ENCODE measurements at regions of chr5 and their contacts with region 1.

Region 1: GRCh38 chr5:18420711-18421110 is 786.5 kb downstream of the TAF11L14 start:
- DNase-seq: no peak
- H3K4me3 ChIP-seq: no peak overlapping the region
- H3K27ac ChIP-seq: no peak overlapping the region
- H3K4me1 ChIP-seq: no peaks in the 10 kb centered on the region
- H3K27me3 ChIP-seq: no peaks in the 10 kb centered on the region
- CTCF ChIP-seq: no peak
- EP300 ChIP-seq: no peak
- POLR2A ChIP-seq: no peak

Region 2: DNA sequence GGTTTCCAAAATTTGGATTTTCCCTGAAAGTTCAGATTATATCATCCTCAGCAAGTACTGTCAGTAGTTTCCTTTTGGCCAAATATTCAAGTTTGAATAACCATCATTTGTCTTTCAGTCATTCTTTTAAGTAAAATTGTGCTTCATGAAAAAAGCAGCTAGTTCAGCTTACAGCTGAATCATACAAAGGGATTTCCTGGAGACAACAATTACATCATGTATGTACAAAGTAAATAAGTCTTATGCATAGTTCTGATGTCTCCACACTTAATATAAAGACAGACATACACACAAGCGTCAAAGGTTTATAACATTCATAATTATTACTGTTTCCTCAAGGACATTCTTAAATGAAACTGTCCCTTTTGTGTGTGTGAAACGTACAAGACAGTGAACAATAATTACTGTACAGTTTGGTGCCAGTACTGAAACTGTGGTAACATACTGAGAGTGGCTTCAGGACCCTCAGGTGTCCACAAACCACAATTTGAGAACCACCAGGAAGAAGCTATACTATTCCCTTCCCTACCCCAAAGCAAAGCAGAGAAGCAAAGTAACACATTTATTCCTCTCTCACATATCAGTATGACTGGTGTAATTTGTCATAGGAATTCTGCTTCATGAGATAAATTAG is 39.9 kb before region 1 on chr5:
- in situ Hi-C with region 1: no loop called
- intact Hi-C with region 1: loop called (anchors 2 kb)
- DNase-seq: no peak
- H3K4me3 ChIP-seq: no peak overlapping the region
- H3K27ac ChIP-seq: no peak overlapping the region
- H3K4me1 ChIP-seq: no peaks in the 10 kb centered on the region
- H3K27me3 ChIP-seq: no peaks in the 10 kb centered on the region
- CTCF ChIP-seq: no peak
- EP300 ChIP-seq: no peak
- POLR2A ChIP-seq: no peak

Region 3: DNA sequence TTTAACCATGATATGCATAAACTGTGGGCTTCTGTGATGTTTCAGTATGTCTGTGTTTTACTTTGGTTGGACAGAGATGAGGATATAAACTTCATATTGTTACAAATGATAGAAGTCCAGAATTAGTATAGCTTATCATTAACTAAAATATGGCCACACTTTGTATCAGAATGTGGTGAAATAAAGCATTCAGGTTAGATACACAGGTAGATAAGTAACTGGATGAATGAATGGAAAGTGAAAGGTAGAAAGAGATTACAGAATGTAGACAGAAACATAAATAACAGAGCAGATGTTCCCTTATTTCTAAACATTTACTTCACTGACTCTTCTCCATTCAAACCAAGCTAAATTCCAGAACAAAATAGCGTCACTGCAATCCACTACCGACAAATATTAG is 533.5 kb after region 1 on chr5:
- in situ Hi-C with region 1: no loop called
- intact Hi-C with region 1: no loop called
- DNase-seq: no peak
- H3K4me3 ChIP-seq: no peak overlapping the region
- H3K27ac ChIP-seq: no peak overlapping the region
- H3K4me1 ChIP-seq: no peaks in the 10 kb centered on the region
- H3K27me3 ChIP-seq: no peaks in the 10 kb centered on the region
- CTCF ChIP-seq: no peak
- EP300 ChIP-seq: no peak
- POLR2A ChIP-seq: no peak